Left cardiac atrium (tissue), 4 donors: ENCODE measurements at regions of chr5 and their contacts with region 1.

Region 1: DNA sequence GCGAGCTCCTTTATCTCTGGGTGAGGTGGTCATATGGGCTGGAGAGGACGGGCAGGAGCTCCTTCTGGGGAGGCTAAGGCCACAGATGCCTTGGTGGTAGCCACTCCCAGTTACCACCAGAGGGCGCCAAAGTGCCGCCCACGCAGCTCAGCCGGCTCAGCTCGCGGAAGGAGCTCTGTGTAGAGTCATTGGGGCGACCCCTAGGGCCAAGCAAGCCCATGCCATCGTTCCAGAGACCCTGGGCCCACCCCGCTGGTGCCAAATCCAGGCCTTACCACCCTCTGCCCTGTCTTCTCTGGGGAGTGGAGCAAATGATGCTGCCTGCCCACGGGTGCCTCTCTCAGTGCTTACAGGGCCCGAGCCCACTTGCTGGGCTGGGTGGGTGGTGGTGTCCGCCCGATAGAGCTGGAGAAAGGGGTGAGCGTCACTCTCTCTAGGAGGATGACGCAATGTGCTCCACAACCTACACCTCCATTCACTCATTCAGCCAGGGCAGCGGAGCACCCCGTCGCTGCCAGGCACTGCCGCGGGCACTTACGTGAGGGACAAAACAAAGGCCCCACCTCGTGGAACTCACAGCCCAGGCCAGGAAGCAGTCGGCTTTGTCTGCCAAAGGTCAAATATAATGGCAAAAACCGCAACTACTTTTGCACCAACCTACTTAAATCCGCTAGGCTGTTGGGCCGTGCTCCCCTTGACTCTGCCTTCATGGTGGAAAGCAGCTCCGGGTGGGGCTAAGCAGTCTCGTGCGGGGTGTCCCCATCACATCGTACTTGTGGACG is 13.8 kb downstream of the TSPAN17 start:
- DNase-seq: peak; percentile 80
- ATAC-seq: peak; percentile 69 to 78

Region 2: DNA sequence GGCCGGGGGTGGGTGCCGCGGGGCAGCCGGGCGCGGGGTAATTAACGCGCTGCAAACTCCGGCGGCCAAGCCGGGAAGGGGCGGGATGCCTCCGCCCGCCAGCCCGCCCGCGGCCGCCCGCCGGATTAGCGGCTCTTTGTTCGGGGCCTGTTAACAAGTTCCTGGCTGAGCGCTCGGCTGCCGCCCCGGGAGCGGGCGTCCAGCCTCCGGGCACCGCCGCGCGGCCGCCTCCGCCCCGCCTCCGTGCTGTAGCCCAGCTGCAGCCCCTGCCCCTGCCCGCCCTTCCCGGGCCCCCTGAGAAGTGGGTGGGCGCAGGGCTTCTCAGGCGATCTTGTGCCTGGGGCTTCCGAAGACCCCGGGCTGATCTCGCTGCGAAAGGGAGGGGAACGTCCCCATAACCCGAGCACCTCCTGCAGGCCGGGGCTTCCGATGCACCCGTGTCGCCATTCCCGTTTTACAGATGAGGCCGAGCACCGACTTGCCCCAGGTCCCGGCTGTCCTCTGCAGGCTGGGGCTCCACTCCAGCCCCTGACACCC is 156.9 kb after region 1 on chr5:
- intact Hi-C with region 1: loop called in 1 of 2 experiments (anchors 10 kb)
- DNase-seq: no peak
- ATAC-seq: peak in 1 of 2 donors; percentile 32

Region 3: DNA sequence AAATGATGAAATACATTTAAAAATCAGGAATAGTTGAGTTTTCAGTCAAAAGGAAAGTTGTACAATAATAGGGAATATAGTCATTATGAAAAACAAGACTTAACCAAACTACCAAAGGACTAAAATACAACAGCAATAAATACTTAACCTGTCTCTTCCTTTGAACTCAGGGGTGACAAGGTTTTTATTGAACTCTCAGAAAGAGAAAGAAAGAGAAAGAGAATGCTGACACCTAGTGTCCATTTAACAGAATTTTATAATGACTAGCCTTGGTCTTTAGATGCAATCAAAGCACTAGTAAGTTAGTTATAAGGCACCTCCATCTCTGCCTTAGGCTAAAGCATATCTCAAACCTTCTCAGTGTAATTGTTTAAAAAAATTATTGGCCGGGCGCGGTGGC is 298.0 kb after region 1 on chr5:
- intact Hi-C with region 1: loop called in 1 of 2 experiments (anchors 5 kb)
- DNase-seq: no peak
- ATAC-seq: no peak